Head of caudate nucleus (tissue), 42 donors: ENCODE measurements at regions of chr1 and their contacts with region 1.

Region 1: GRCh38 chr1:3649342-3650247 is at the start of gene WRAP73:
- DNase-seq: peak; percentile 75 to 95 (median 90)

Region 2: GRCh38 chr1:3564921-3565827 is 84.4 kb before region 1 on chr1:
- intact Hi-C with region 1: no loop called
- DNase-seq: peak in 26 of 42 donors; percentile 13 to 69 (median 47)

Region 3: DNA sequence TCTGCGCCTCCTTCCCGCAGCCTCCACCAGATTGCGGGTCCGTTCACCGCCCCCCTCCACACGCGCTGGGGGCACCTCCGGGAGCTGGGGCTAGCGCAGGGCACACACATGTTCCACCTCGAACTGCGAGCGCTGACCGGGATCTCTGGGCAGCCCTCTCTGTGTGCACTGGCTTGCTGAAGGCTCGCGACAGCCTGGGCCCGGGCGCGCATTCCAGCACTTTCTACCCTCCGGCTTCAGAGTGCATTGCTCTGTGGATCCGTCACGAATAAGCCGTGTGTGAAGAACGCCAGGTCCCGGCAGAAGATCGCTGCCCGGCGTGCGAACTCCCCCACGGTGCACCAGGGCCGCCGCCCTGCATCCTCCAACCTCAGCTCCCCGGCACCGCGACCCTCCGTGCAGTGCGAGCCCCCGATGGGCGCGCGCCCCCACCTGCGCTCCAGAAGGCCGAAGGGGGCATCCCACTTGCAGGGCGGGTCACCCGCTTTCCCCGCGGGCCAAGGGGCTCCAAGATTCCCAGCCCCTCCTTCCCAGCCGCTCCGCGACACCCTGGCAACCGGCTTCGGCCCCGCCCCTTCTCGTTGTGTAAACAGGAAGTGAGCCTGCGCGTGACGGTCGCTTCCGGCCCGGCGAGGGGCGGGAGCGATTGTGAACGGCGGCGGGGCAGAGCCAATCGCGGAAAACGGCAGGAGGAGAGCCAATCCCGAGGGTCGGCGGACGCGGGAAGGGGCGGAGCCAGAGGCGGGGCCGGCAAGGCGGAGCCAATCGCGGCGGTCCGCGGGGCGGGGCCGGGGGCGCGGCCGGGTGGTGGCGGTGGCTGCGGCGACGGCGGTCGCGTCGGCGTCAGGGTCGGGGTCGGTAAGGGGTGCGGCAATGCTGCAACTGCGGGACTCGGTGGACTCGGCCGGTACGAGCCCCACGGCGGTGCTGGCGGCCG is 25.1 kb before region 1 on chr1 and contains the start of gene TPRG1L:
- intact Hi-C with region 1: loop called (anchors 2 kb)
- DNase-seq: peak; percentile 96 to 100 (median 99)

Region 4: GRCh38 chr1:4033129-4033676 is 383.6 kb after region 1 on chr1:
- intact Hi-C with region 1: no loop called
- DNase-seq: peak in 1 of 42 donors; percentile 25